GM13977 (cell line): ENCODE measurements at regions of chr19 and their contacts with region 1.

Region 1: DNA sequence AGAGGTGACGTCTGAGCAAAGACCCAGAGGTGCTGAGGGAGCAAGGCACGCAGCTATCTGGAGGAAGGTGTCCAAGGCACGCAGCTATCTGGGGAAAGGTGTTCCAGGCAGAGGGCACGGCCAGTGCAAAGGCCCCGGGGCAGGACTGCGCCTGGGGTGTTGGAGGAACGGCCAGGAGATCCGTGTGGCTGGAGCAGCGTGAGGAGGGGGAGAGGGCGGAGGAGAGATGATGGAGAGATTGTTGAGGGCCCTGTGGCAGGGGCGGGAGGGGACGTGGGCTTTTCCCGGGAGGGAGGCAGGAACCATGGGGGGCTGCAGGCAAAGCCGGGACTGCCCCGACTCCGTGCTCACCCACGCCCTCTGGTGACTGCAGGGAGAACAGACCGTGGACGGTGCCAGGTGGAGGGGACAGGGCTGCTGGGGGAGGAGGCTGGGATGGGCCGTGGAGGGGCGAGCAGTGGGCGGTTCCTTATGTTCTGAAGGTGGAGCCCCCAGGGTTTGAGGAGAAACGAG is 13.3 kb upstream of the MISP start:
- DNase-seq: peak; percentile 88
- CTCF ChIP-seq: peak; percentile 67

Region 2: GRCh38 chr19:588093-588740 is 149.4 kb before region 1 on chr19:
- in situ Hi-C with region 1: loop called (anchors 25 kb)
- DNase-seq: peak; percentile 74
- CTCF ChIP-seq: peak; percentile 59

Region 3: DNA sequence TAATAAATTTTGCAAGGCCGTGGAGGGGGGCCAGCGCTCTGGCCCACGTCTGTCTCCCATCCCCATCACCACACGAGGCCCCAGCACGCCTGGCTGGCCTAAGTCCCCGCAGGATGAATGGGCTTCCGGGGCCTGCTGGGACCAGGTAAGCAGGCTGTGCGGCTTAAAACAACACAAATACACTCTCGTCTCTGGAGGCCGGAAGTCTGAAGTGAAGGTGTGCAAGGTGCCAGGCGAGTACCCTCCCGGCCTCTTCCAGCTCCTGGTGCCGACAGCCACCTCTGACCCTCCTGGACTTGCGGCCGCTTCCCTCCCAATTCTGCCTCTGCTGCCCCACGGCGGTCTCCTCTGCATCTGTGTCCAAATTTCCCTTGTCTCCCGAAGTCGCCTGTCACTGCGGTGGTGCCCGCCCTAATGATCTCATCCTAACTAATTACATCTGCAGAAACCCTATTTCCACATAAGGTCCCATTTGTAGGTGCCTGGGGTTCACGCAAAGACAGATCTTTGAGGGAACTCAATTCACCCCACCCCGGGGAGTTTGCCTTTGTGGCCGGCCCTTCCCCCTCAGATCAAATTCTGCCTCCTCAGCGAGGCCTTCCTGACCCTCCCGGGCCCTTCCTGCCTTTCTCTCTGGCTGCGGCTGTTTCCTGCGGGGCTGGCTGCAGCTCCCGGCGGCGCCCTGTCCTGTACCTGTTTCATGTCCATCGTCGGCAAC is 51.5 kb after region 1 on chr19:
- in situ Hi-C with region 1: no loop called
- DNase-seq: no peak
- CTCF ChIP-seq: no peak